CD14-positive monocyte (primary cell): ENCODE measurements at regions of chr9 and their contacts with region 1.

Region 1: GRCh38 chr9:78121488-78121887 is 89.9 kb upstream of the GNAQ start:
- DNase-seq: peak; percentile 67 to 86 (median 76)
- H3K4me3 ChIP-seq: no peak overlapping the region
- H3K4me3 Mint-ChIP-seq: no peak overlapping the region
- H3K27ac ChIP-seq: no peak overlapping the region
- H3K27ac Mint-ChIP-seq: peak overlapping the region in 3 of 7 donors; percentile 12 to 66 (median 61)
- H3K4me1 ChIP-seq: peaks cover 28 to 31% of the 10 kb centered on the region in 2 donors
- H3K4me1 Mint-ChIP-seq: peaks cover 34% of the 10 kb centered on the region
- H3K27me3 ChIP-seq: no peaks in the 10 kb centered on the region
- H3K27me3 Mint-ChIP-seq: no peaks in the 10 kb centered on the region
- CTCF ChIP-seq: peak; percentile 82

Region 2: GRCh38 chr9:77864211-77864889 is 257.1 kb before region 1 on chr9:
- intact Hi-C with region 1: loop called in 1 of 2 experiments (anchors 5 kb)
- DNase-seq: peak; percentile 69 to 77 (median 76)
- H3K4me3 ChIP-seq: peak overlapping the region in 1 of 3 experiments; percentile 1
- H3K4me3 Mint-ChIP-seq: peak overlapping the region in 1 of 2 donors; percentile 39
- H3K27ac ChIP-seq: peak overlapping the region in 1 of 2 donors; percentile 68
- H3K27ac Mint-ChIP-seq: peak overlapping the region; percentile 68 to 90 (median 83)
- H3K4me1 ChIP-seq: peaks cover 18 to 22% of the 10 kb centered on the region in 2 donors
- H3K4me1 Mint-ChIP-seq: peaks cover 36% of the 10 kb centered on the region
- H3K27me3 ChIP-seq: no peaks in the 10 kb centered on the region
- H3K27me3 Mint-ChIP-seq: no peaks in the 10 kb centered on the region
- CTCF ChIP-seq: peak; percentile 36

Region 3: GRCh38 chr9:77977210-77977611 is 144.3 kb before region 1 on chr9:
- intact Hi-C with region 1: loop called in 1 of 2 experiments (anchors 2 kb)
- DNase-seq: peak; percentile 70 to 86 (median 77)
- H3K4me3 ChIP-seq: peak overlapping the region in 1 of 3 experiments; percentile 49
- H3K4me3 Mint-ChIP-seq: peak overlapping the region; percentile 2 to 37
- H3K27ac ChIP-seq: peak overlapping the region; percentile 49 to 71
- H3K27ac Mint-ChIP-seq: peak overlapping the region; percentile 28 to 87 (median 80)
- H3K4me1 ChIP-seq: peaks cover 44 to 50% of the 10 kb centered on the region in 2 donors
- H3K4me1 Mint-ChIP-seq: peaks cover 56% of the 10 kb centered on the region
- H3K27me3 ChIP-seq: no peaks in the 10 kb centered on the region
- H3K27me3 Mint-ChIP-seq: no peaks in the 10 kb centered on the region
- CTCF ChIP-seq: peak; percentile 34

Region 4: DNA sequence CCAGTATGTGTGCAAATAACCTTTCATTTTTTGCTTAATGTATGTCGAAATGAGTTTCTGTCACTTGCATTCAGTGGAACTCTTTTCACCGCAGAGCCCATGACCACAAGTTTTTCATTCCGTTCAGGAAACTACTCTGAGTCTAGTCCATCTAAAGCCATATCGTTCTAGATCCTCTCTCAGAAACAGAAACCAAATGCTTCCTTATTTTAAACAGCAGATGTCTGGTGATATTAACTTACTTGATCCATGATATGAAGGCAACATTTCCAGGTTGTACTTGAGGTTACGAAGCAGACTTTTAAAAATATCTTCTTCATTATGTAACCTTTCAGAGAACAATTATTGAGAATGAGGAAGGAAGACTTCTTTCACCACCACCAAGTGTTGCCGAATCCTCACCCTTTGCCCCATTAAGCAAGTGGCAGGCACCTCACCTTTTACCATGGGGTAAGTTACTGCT is 17.5 kb before region 1 on chr9:
- intact Hi-C with region 1: no loop called
- DNase-seq: peak; percentile 78 to 88 (median 83)
- H3K4me3 ChIP-seq: peak overlapping the region in 2 of 3 experiments; percentile 30 to 63
- H3K4me3 Mint-ChIP-seq: peak overlapping the region; percentile 2 to 87
- H3K27ac ChIP-seq: peak overlapping the region; percentile 63 to 85
- H3K27ac Mint-ChIP-seq: peak overlapping the region; percentile 91 to 97 (median 93)
- H3K4me1 ChIP-seq: peaks cover 56 to 72% of the 10 kb centered on the region in 2 donors
- H3K4me1 Mint-ChIP-seq: peaks cover 68% of the 10 kb centered on the region
- H3K27me3 ChIP-seq: no peaks in the 10 kb centered on the region
- H3K27me3 Mint-ChIP-seq: peaks cover 0 to 4% (median 1%) of the 10 kb centered on the region in 3 donors
- CTCF ChIP-seq: no peak